Naive thymus-derived CD4-positive, alpha-beta T cell (primary cell): ENCODE measurements at regions of chr7 and their contacts with region 1.

Region 1: GRCh38 chr7:98841179-98841997 is 28.4 kb downstream of the TMEM130 start:
- DNase-seq: peak; percentile 29 to 71 (median 57)
- ATAC-seq: peak; percentile 81
- H3K4me3 ChIP-seq: no peak overlapping the region
- H3K4me3 Mint-ChIP-seq: peak overlapping the region in 1 of 10 donors; percentile 8
- H3K27ac ChIP-seq: no peak overlapping the region
- H3K27ac Mint-ChIP-seq: no peak overlapping the region
- H3K4me1 ChIP-seq: no peaks in the 10 kb centered on the region
- H3K4me1 Mint-ChIP-seq: no peaks in the 10 kb centered on the region
- H3K27me3 ChIP-seq: no peaks in the 10 kb centered on the region
- H3K27me3 Mint-ChIP-seq: peaks cover 0 to 22% (median 4%) of the 10 kb centered on the region in 5 donors

Region 2: GRCh38 chr7:98021588-98022351 is 819.6 kb before region 1 on chr7:
- CTCF ChIA-PET with region 1: interaction called, 3 read pairs
- POLR2A ChIA-PET with region 1: no interaction called
- intact Hi-C with region 1: loop called in 1 of 2 experiments (anchors 5 kb)
- DNase-seq: peak; percentile 44 to 84 (median 72)
- ATAC-seq: peak; percentile 88
- H3K4me3 ChIP-seq: no peak overlapping the region
- H3K4me3 Mint-ChIP-seq: no peak overlapping the region
- H3K27ac ChIP-seq: no peak overlapping the region
- H3K27ac Mint-ChIP-seq: peak overlapping the region in 1 of 9 donors; percentile 27
- H3K4me1 ChIP-seq: no peaks in the 10 kb centered on the region
- H3K4me1 Mint-ChIP-seq: peaks cover 0 to 5% (median 5%) of the 10 kb centered on the region in 7 donors
- H3K27me3 ChIP-seq: no peaks in the 10 kb centered on the region
- H3K27me3 Mint-ChIP-seq: peaks cover 0 to 10% (median 7%) of the 10 kb centered on the region in 5 donors

Region 3: DNA sequence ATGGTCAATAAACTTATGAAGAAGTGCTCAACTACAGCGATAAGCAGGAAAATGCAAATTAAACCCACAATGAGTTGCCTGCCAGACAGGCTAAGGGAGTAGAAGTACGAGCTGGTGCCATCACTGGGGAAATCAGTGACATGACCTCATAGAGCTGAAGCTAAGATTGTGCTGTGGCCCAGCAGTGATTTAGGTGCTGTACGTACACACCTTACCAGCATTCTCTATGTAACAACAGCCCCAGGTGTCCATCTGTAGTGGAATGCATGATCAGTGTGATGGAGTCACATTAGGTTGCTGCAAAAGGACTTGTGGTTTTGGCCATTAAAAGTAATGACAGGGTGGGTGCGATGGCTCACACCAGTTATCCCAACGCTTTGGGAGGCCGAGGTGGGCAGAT is 583.7 kb before region 1 on chr7:
- CTCF ChIA-PET with region 1: interaction called, 10 read pairs
- POLR2A ChIA-PET with region 1: no interaction called
- intact Hi-C with region 1: no loop called
- DNase-seq: no peak
- ATAC-seq: no peak
- H3K4me3 ChIP-seq: no peak overlapping the region
- H3K4me3 Mint-ChIP-seq: no peak overlapping the region
- H3K27ac ChIP-seq: no peak overlapping the region
- H3K27ac Mint-ChIP-seq: peak overlapping the region in 2 of 9 donors; percentile 37 to 39
- H3K4me1 ChIP-seq: peaks cover 0 to 5% of the 10 kb centered on the region in 2 donors
- H3K4me1 Mint-ChIP-seq: peaks cover 16 to 33% (median 30%) of the 10 kb centered on the region in 7 donors
- H3K27me3 ChIP-seq: no peaks in the 10 kb centered on the region
- H3K27me3 Mint-ChIP-seq: no peaks in the 10 kb centered on the region

Region 4: DNA sequence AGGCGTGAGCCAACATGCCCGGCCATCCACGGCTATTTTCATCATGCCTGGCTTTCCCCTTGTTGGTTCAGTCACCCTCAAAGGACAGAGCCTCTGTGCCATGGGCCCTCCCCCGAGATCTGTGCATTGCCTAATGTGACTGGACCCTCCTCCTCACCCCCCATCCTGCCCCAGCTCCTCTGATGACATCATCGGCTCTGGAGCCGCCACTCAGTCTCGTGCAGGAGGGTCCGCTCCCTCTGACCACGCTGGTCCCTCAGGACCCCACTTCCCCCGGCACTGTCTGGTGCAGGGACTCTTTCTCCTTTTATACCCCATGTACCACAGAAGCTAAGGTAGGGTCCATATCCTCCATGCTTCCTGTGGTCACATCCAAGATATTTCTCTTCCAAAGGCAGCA is 407.3 kb before region 1 on chr7:
- CTCF ChIA-PET with region 1: interaction called, 16 read pairs
- POLR2A ChIA-PET with region 1: no interaction called
- intact Hi-C with region 1: loop called in 1 of 2 experiments (anchors 1 kb)
- DNase-seq: no peak
- ATAC-seq: no peak
- H3K4me3 ChIP-seq: no peak overlapping the region
- H3K4me3 Mint-ChIP-seq: peak overlapping the region in 1 of 10 donors; percentile 41
- H3K27ac ChIP-seq: no peak overlapping the region
- H3K27ac Mint-ChIP-seq: no peak overlapping the region
- H3K4me1 ChIP-seq: no peaks in the 10 kb centered on the region
- H3K4me1 Mint-ChIP-seq: peaks cover 0 to 12% (median 10%) of the 10 kb centered on the region in 7 donors
- H3K27me3 ChIP-seq: no peaks in the 10 kb centered on the region
- H3K27me3 Mint-ChIP-seq: peaks cover 0 to 10% (median 0%) of the 10 kb centered on the region in 5 donors

Region 5: DNA sequence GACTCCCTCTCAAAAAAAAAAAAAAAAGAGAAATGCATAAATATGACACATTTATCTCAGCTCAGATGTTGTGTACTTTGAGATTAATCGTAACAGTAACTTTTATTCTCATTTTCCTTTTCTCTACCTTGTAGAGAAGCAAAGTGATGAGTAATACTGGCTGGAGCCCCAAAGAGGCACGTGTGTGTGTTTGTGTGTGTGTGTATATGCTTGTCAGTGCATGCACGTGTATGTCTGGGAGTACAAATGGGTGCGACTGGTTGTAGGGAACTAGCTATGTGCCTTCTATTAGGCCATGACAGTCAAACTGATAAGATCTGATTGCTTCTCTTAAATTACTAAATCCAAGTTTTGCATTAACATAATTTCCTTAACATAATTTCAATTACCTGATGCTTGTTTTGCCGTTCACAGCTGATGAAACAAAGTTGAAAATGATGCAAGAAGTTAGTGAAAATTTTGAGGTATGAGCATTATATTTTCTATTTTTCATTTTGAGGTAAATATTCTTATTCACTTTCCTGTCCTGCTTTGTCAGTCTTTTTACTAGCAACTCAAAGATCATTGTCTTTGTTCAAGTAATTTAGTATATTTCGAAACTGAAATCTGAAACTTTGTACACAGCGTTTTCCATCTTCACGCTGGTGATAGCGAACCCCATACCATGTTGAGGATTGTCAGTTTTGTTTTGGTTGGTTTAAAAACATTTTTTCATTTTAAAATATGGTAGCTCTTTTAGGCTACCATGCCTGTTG is 40.4 kb after region 1 on chr7:
- CTCF ChIA-PET with region 1: no interaction called
- POLR2A ChIA-PET with region 1: no interaction called
- intact Hi-C with region 1: no loop called
- DNase-seq: no peak
- ATAC-seq: no peak
- H3K4me3 ChIP-seq: no peak overlapping the region
- H3K4me3 Mint-ChIP-seq: peak overlapping the region in 2 of 10 donors; percentile 18 to 29
- H3K27ac ChIP-seq: no peak overlapping the region
- H3K27ac Mint-ChIP-seq: peak overlapping the region in 4 of 9 donors; percentile 19 to 69 (median 47)
- H3K4me1 ChIP-seq: peaks cover 9 to 14% of the 10 kb centered on the region in 2 donors
- H3K4me1 Mint-ChIP-seq: peaks cover 0 to 43% (median 31%) of the 10 kb centered on the region in 7 donors
- H3K27me3 ChIP-seq: no peaks in the 10 kb centered on the region
- H3K27me3 Mint-ChIP-seq: no peaks in the 10 kb centered on the region